Heart left ventricle (tissue), 16 donors: ENCODE measurements at regions of chr2 and their contacts with region 1.

Region 1: DNA sequence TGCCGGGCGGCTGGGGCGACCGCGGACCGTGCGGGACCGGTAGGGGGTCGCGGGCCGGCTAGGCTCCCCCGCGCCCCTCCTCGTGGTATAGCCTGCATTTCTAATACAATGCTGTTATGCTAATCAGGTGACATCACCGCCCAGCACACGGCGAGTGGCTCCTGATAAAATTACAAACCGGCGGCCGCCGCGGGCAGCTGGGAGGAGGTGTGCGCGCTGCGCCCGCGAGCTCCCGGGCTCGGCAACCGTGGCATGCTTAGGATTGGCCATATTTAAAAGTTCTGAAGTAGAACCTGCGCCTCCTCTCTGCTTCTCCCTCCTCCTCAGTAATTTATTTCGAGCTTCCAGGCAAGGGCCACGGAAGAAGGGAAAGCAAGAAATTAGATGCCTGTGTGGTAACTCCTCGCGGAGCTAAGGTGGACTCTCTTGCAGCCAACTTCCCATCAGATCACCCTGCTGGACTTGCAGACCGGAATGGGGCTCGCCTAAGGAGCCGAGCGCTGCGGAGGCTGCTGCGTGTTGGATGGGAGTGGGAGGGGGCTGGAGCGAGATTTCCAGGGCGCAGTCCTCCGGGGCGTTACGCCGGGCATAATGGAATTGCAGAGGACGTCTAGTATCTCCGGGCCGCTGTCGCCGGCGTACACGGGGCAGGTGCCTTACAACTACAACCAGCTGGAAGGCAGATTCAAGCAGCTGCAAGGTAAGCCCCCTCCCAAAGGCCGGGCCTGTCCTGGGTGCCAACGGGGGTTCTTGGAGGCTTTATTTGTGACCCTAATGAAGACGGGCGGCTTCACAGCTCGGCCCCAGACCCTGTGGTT is 102.3 kb downstream of the SPTBN1 start:
- DNase-seq: peak; percentile 49 to 76 (median 54)
- ATAC-seq: peak in 3 of 4 donors; percentile 24 to 60 (median 56)
- H3K4me3 ChIP-seq: peak overlapping the region; percentile 16 to 67 (median 55)
- H3K27ac ChIP-seq: peak overlapping the region; percentile 61 to 94 (median 84)
- H3K4me1 ChIP-seq: peaks cover 24 to 99% (median 85%) of the 10 kb centered on the region in 12 donors
- H3K27me3 ChIP-seq: no peaks in the 10 kb centered on the region
- CTCF ChIP-seq: no peak
- POLR2A ChIP-seq: no peak

Region 2: GRCh38 chr2:54522624-54523281 is 35.6 kb before region 1 on chr2:
- intact Hi-C with region 1: loop called in 2 of 10 experiments (anchors 5 kb)
- DNase-seq: peak in 2 of 5 donors; percentile 45
- ATAC-seq: peak in 2 of 4 donors; percentile 37 to 47
- H3K4me3 ChIP-seq: no peak overlapping the region
- H3K27ac ChIP-seq: peak overlapping the region in 5 of 12 donors; percentile 6 to 82 (median 59)
- H3K4me1 ChIP-seq: peaks cover 8 to 94% (median 87%) of the 10 kb centered on the region in 12 donors
- H3K27me3 ChIP-seq: no peaks in the 10 kb centered on the region
- CTCF ChIP-seq: peak; percentile 42 to 68 (median 59)
- POLR2A ChIP-seq: no peak

Region 3: GRCh38 chr2:54528311-54528945 is 30.0 kb before region 1 on chr2:
- intact Hi-C with region 1: loop called in 2 of 10 experiments (anchors 5 kb)
- DNase-seq: no peak
- ATAC-seq: peak in 1 of 4 donors; percentile 21
- H3K4me3 ChIP-seq: no peak overlapping the region
- H3K27ac ChIP-seq: peak overlapping the region in 7 of 12 donors; percentile 8 to 82 (median 28)
- H3K4me1 ChIP-seq: peaks cover 5 to 90% (median 68%) of the 10 kb centered on the region in 12 donors
- H3K27me3 ChIP-seq: no peaks in the 10 kb centered on the region
- CTCF ChIP-seq: no peak
- POLR2A ChIP-seq: no peak

Region 4: GRCh38 chr2:54597153-54597848 is 38.9 kb after region 1 on chr2:
- intact Hi-C with region 1: loop called in 1 of 10 experiments (anchors 5 kb)
- DNase-seq: peak; percentile 72 to 77 (median 74)
- ATAC-seq: peak; percentile 30 to 58 (median 52)
- H3K4me3 ChIP-seq: peak overlapping the region in 1 of 12 donors; percentile 17
- H3K27ac ChIP-seq: peak overlapping the region in 11 of 12 donors; percentile 44 to 82 (median 73)
- H3K4me1 ChIP-seq: peaks cover 43 to 96% (median 84%) of the 10 kb centered on the region in 12 donors
- H3K27me3 ChIP-seq: no peaks in the 10 kb centered on the region
- CTCF ChIP-seq: no peak
- POLR2A ChIP-seq: no peak

Region 5: DNA sequence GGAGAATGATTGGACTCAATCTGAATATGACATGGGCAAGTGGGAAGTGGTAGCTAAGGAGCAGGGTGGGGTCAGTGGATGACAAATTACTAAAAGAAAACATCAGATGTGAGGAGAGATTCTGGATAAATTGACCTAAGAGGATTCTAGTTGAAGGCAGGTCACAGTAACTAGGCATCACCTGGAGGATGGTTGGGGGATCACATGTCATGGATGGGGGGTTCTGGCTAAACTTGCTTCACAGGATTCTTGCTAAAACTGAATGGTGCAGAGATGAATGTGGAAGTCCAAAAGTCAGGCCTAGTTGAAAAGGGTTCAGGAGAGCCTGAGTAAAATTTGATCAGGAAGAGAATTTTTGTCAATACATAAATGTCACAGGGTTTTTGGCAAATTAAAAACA is 655.4 kb after region 1 on chr2:
- intact Hi-C with region 1: no loop called
- DNase-seq: no peak
- ATAC-seq: no peak
- H3K4me3 ChIP-seq: no peak overlapping the region
- H3K27ac ChIP-seq: no peak overlapping the region
- H3K4me1 ChIP-seq: no peaks in the 10 kb centered on the region
- H3K27me3 ChIP-seq: no peaks in the 10 kb centered on the region
- CTCF ChIP-seq: no peak
- POLR2A ChIP-seq: no peak